ENCODE measurements at regions of chr2 and their contacts with region 1.

Region 1: DNA sequence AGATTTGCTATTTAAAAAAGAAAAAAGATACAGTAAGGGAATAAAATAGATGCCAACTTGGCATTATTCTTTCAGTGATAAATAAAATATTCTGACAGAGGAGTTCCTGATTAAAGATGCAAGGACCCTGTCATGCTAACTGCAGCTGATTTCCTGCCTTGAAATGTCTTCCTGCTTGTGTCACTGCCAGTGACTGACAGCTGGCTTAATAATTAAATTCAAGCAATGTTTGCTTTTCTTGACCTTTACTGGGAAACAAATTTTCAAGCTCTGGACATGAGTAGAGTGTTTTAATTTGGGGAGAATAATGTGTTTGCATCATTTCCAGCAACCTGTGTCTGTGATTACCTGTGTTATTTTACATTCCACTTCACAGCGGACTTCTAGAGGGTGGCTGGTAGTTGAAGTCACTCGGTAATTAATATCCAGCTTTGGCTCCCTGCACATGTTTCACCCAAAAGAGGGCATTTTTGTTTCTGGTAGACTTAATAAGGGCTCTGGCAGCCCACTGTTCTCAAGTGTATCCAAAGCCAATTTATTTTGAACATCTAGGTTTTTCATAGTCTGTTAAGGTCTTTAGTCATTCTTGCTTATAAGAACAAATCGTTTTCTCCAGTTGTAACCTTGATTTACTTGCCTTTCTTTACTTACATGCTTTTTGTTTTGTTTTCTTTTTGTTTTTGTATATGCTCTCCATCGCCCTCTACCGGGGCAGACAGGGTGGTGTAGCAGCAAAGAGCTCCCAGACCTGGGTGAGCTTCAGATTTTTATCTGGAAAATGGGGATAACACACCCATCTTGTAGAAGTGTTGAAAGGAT is 48.5 kb upstream of the PROKR1 start:
- DNase-seq: peak; percentile 33
- CTCF ChIP-seq: peak; percentile 76

Region 2: GRCh38 chr2:68487773-68488355 is 107.0 kb before region 1 on chr2:
- CTCF ChIA-PET with region 1: interaction called, 14 read pairs
- POLR2A ChIA-PET with region 1: no interaction called
- DNase-seq: peak; percentile 38
- CTCF ChIP-seq: peak; percentile 33

Region 3: GRCh38 chr2:68577183-68577582 is 17.7 kb before region 1 on chr2:
- CTCF ChIA-PET with region 1: interaction called, 23 read pairs
- POLR2A ChIA-PET with region 1: no interaction called
- DNase-seq: no peak
- CTCF ChIP-seq: no peak

Region 4: GRCh38 chr2:68605939-68606338 is 11.1 kb after region 1 on chr2:
- CTCF ChIA-PET with region 1: interaction called, 12 read pairs
- POLR2A ChIA-PET with region 1: no interaction called
- DNase-seq: no peak
- CTCF ChIP-seq: no peak

Region 5: GRCh38 chr2:68627615-68628014 is 32.7 kb after region 1 on chr2:
- CTCF ChIA-PET with region 1: interaction called, 11 read pairs
- POLR2A ChIA-PET with region 1: no interaction called
- DNase-seq: no peak
- CTCF ChIP-seq: no peak